Sigmoid colon (tissue), 7 donors: ENCODE measurements at regions of chr10 and their contacts with region 1.

Region 1: GRCh38 chr10:127715782-127716378 is 21.1 kb upstream of the FOXI2 start:
- DNase-seq: no peak
- H3K4me3 ChIP-seq: no peak overlapping the region
- H3K27ac ChIP-seq: no peak overlapping the region
- H3K4me1 ChIP-seq: no peaks in the 10 kb centered on the region
- H3K27me3 ChIP-seq: no peaks in the 10 kb centered on the region
- CTCF ChIP-seq: peak in 2 of 4 experiments; percentile 11 to 12
- EP300 ChIP-seq: no peak
- POLR2A ChIP-seq: no peak

Region 2: DNA sequence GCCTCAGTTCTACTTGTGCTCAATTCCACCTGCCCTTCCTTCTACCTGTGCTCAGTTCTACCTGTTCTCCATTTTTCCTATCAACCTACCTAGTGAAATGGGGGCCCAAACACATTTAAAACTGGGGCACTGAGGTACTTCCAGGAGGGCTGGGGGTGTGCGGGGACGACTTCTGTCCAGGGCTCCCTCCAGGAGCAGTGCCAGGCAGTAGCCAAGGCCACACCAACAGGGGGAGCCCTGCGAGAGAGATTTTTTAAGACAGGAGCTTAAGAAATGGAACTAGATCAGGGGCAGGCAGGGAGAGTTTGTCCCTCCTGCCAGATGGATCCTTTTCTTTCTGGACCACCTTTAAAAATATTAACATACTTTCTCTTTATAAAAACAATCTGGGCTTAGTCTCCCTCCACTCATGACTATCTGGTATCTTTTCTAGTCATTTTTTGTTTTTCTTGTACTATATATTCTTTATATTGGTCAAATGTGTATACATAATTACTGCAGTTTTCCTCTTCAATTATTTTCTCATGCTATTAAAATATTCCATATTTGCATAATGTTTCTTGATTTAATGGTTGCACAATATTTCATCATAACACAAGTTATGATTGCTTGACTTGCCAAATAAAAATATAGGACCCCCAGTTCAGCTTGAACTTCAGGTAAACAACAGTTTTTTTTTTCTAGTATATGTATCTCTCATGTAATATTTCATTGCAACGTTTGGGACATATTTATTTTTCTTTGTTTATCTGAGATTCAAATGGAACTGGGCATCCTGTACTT is 472.2 kb before region 1 on chr10:
- intact Hi-C with region 1: no loop called
- DNase-seq: no peak
- H3K4me3 ChIP-seq: no peak overlapping the region
- H3K27ac ChIP-seq: no peak overlapping the region
- H3K4me1 ChIP-seq: no peaks in the 10 kb centered on the region
- H3K27me3 ChIP-seq: no peaks in the 10 kb centered on the region
- CTCF ChIP-seq: peak in 1 of 4 experiments; percentile 9
- EP300 ChIP-seq: no peak
- POLR2A ChIP-seq: no peak

Region 3: DNA sequence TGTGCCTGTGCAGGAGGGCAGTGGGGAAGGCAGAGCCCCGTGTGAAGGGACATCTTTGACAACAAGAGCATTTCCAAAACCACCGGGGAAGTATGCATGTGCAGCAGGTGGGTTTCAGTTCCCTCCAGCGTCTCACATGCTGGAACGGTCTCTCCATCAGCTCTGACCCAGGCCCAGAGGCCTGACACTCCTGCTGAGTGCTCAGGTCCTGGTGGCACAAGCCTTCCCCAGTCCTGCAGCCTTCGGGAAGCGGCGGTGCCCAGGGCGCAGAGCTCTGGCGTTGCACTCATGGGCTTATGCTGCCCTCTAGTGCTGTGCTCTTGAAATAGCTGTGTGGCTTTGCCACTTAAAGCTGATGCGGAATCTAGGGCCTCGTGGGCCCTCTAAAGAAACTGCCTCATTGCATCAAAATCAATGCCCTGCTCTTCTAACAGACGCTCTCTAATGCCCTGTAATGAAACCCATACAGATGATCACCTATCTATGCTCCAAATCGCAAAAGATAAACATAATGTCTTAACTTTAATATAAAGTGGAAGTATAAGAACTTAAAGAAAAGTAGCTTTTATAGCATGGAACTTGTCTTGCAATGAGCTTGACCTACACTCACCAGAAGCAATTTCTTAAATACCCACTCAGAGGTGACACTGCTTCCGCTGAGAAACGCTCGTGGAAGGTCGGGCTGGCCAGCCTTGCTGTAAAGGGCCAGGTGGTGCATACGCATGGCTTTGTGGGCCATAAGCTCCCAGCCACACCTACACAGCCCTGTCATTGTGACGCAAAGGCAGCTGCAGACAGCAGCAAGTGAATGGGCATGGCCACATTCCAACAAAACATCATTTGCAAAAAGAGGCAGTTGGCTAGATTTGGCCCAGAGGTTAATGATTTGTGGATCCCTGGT is 138.2 kb after region 1 on chr10:
- intact Hi-C with region 1: loop called (anchors 2 kb)
- DNase-seq: peak; percentile 78
- H3K4me3 ChIP-seq: no peak overlapping the region
- H3K27ac ChIP-seq: no peak overlapping the region
- H3K4me1 ChIP-seq: no peaks in the 10 kb centered on the region
- H3K27me3 ChIP-seq: peaks cover 0 to 11% (median 0%) of the 10 kb centered on the region in 3 donors
- CTCF ChIP-seq: peak; percentile 51 to 83 (median 64)
- EP300 ChIP-seq: no peak
- POLR2A ChIP-seq: no peak

Region 4: GRCh38 chr10:128324077-128324827 is 608.4 kb after region 1 on chr10:
- intact Hi-C with region 1: no loop called
- DNase-seq: no peak
- H3K4me3 ChIP-seq: no peak overlapping the region
- H3K27ac ChIP-seq: no peak overlapping the region
- H3K4me1 ChIP-seq: peaks cover 0 to 6% (median 0%) of the 10 kb centered on the region in 4 donors
- H3K27me3 ChIP-seq: peaks cover 0 to 6% (median 0%) of the 10 kb centered on the region in 3 donors
- CTCF ChIP-seq: peak in 2 of 4 experiments; percentile 29 to 48
- EP300 ChIP-seq: no peak
- POLR2A ChIP-seq: no peak